Tibial artery (tissue), 4 donors: ENCODE measurements at regions of chr10 and their contacts with region 1.

Region 1: GRCh38 chr10:86684331-86685097 is 16.2 kb downstream of the LDB3 start:
- DNase-seq: peak; percentile 43 to 91
- H3K4me3 ChIP-seq: peak overlapping the region in 1 of 2 donors; percentile 13
- H3K27ac ChIP-seq: peak overlapping the region; percentile 82 to 89
- H3K4me1 ChIP-seq: peaks cover 0 to 100% (median 76%) of the 10 kb centered on the region in 4 donors
- H3K27me3 ChIP-seq: no peaks in the 10 kb centered on the region
- CTCF ChIP-seq: peak; percentile 56 to 64

Region 2: DNA sequence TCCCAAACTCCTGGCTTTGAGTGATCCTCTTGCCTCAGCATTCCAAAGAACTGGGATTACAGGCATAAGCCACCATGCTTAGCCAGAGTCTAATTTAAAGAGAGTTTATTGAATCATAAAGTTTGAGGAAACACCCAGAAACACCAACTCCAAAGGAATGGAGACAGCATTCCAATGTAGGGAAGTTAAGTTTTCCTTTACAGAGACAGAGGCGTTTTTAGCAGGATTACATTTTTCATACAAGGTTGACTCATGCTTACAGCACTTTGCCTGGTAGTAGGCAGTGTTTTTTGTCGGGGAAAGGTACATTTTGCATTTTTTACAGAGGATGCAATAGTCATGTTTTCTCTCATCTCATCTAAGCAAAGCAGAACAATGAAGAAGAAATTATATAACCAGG is 49.1 kb before region 1 on chr10:
- intact Hi-C with region 1: loop called (anchors 5 kb)
- DNase-seq: no peak
- H3K4me3 ChIP-seq: no peak overlapping the region
- H3K27ac ChIP-seq: no peak overlapping the region
- H3K4me1 ChIP-seq: peaks cover 0 to 23% (median 7%) of the 10 kb centered on the region in 4 donors
- H3K27me3 ChIP-seq: peaks cover 0 to 6% of the 10 kb centered on the region in 2 donors
- CTCF ChIP-seq: no peak

Region 3: DNA sequence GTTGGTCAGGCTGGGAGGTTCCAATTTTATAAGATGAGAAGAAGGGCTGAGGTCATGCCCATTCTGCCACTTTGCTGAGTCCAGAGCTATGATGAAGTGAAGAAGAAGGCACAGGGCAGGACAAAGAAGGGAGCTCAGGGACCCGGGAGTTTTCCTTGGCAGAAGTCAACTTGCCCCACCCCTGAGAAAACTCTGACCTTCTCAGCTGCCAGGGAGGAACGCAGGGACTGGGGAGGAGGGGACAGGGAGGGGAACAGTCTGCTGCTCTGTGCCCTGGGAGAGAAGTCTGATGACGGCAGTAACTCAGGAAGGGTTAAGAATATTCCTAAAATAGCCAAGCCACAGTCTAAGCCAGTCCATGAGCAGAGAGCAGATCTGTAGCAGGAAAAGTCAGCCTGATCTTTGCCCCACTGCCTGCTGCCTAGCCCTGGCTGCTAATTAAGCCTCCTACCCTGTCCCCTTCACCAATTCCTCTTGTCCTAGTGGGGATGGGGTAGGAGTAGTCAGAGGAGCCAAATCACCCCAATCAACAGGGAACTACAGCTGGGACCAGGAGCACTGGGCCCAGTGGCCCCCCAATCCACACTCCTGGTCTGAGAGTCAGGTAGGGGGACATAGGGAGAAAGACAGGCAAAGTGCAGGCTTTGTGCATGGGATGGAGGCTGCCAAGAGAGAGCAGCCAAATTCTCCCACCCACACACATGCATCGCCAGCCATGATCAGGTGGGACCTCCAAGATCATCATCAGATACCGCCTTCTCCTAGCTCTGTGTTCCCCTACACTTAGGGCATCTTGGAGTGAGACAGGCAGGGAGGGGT is 295.7 kb after region 1 on chr10:
- intact Hi-C with region 1: no loop called
- DNase-seq: peak in 1 of 2 donors; percentile 93
- H3K4me3 ChIP-seq: peak overlapping the region in 1 of 2 donors; percentile 6
- H3K27ac ChIP-seq: peak overlapping the region; percentile 90 to 100
- H3K4me1 ChIP-seq: peaks cover 3 to 69% (median 27%) of the 10 kb centered on the region in 4 donors
- H3K27me3 ChIP-seq: no peaks in the 10 kb centered on the region
- CTCF ChIP-seq: no peak